CD4-positive, alpha-beta memory T cell (primary cell): ENCODE measurements at regions of chr10 and their contacts with region 1.

Region 1: DNA sequence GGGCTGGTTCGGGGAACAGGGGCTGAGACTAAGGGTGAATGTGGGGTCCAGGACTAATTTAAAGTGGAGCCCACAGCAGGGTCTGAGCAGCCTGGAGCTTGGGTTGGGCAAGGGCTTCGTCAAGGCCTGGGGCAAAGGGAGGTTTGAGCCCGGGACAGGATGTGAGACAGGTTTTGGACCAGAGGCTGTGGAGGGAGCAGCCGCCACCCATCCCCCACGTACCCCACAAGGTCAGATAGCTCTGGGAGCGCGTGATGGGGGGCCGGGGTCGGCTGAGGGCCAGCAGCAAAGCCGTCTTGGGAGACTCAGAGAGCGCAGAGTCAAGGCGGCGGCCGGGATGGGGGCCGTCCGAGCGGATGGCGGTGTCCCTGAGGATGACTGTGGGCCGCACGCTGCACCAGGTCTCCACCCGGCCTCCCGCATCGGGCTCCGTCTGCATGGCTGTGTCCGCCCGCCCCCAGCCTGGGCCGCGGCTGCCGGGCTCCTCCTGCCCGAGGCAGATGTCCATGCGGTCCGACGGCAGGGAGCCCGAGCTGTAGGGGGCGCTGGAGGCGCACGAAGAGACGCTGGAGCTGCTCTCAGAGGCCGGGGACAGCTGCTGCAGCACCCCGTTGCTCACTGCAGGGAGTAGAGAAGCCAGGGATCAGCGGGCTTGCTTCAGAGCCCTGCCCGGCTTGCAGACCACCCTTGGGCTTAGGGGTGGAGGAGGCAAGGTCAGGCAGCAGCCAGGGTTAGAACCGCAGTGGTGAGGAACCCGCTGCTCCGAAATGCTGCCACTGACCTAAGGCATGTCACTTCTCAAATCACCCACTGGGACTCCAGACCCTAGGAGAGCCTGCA is 12.1 kb downstream of the PDZD7 start:
- DNase-seq: peak; percentile 53 to 68 (median 59)
- H3K4me3 ChIP-seq: no peak overlapping the region
- H3K4me3 Mint-ChIP-seq: no peak overlapping the region
- H3K27ac ChIP-seq: no peak overlapping the region
- H3K27ac Mint-ChIP-seq: no peak overlapping the region
- H3K4me1 ChIP-seq: peaks cover 7% of the 10 kb centered on the region
- H3K4me1 Mint-ChIP-seq: peaks cover 5 to 10% (median 6%) of the 10 kb centered on the region in 4 donors
- H3K27me3 ChIP-seq: peaks cover 11% of the 10 kb centered on the region
- H3K27me3 Mint-ChIP-seq: peaks cover 25 to 32% of the 10 kb centered on the region in 2 donors

Region 2: GRCh38 chr10:100969187-100970075 is 49.4 kb before region 1 on chr10 and contains the start of gene SEMA4G:
- CTCF ChIA-PET with region 1: interaction called, 60 read pairs
- POLR2A ChIA-PET with region 1: interaction called, 3 read pairs
- intact Hi-C with region 1: loop called (anchors 2 kb)
- DNase-seq: peak; percentile 24 to 49 (median 32)
- H3K4me3 ChIP-seq: peak within 1 kb of the TSS in 1 of 2 donors; percentile 58
- H3K4me3 Mint-ChIP-seq: peak within 1 kb of the TSS; percentile 66 to 81 (median 76)
- H3K27ac ChIP-seq: no peak within 1 kb of the TSS
- H3K27ac Mint-ChIP-seq: peak within 1 kb of the TSS in 4 of 7 donors; percentile 43 to 70 (median 59)
- H3K4me1 ChIP-seq: peaks cover 18% of the 10 kb centered on the region
- H3K4me1 Mint-ChIP-seq: peaks cover 4 to 23% (median 14%) of the 10 kb centered on the region in 4 donors
- H3K27me3 ChIP-seq: no peaks in the 10 kb centered on the region
- H3K27me3 Mint-ChIP-seq: no peaks in the 10 kb centered on the region
- total RNA-seq, gene SEMA4G: 1.1 to 1.4 TPM

Region 3: GRCh38 chr10:101042667-101043355 is 24.0 kb after region 1 on chr10:
- CTCF ChIA-PET with region 1: interaction called, 53 read pairs
- POLR2A ChIA-PET with region 1: interaction called, 4 read pairs
- intact Hi-C with region 1: no loop called
- DNase-seq: peak; percentile 64 to 84 (median 68)
- H3K4me3 ChIP-seq: peak overlapping the region; percentile 81 to 94
- H3K4me3 Mint-ChIP-seq: peak overlapping the region; percentile 92 to 99 (median 97)
- H3K27ac ChIP-seq: peak overlapping the region; percentile 68
- H3K27ac Mint-ChIP-seq: peak overlapping the region; percentile 87 to 99 (median 97)
- H3K4me1 ChIP-seq: peaks cover 27% of the 10 kb centered on the region
- H3K4me1 Mint-ChIP-seq: peaks cover 16 to 25% (median 19%) of the 10 kb centered on the region in 4 donors
- H3K27me3 ChIP-seq: peaks cover under 1% of the 10 kb centered on the region
- H3K27me3 Mint-ChIP-seq: peaks cover 11 to 12% of the 10 kb centered on the region in 2 donors

Region 4: DNA sequence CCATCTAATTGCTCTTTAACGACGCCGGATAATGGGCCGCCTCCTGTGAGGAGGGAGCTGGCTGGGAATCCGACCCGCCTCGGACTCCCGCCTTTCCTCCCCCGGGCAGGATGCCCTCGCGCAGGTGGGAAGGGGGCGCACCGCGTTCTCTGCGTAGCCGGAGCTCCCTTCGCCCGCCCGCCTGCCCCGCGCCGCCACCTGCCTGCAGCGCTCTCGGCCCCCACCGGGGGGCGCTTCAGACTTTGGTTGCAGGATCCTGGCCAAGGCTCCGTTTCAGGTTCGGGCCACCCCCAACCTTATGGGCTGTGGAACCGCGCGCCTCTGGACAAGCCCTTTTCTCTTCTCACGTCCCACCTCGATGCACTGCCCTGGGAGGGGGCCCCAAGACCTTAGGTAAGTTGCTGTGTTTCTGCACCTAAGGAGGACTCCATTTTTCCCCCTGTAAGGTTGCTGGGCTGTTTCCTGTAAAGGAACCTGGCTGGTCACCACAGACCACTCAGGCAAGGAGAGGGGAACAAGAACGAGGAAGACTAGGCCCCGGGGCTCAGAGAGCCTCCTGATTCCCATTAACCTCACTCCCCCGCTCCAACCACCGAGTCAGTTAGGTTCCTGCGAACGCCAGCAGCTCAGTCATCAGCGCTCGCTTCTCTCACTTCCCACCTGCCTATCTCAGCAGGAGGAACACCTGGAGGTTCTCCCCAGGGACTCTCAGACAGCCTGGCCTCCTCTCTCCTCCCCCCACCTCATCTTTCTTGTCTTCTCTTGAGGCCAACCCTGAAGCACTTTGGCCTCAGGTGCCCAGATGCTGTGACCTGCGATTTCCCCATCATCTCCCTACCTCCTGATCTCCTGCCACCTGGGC is 31.6 kb after region 1 on chr10:
- CTCF ChIA-PET with region 1: interaction called, 31 read pairs
- POLR2A ChIA-PET with region 1: no interaction called
- intact Hi-C with region 1: no loop called
- DNase-seq: peak; percentile 72 to 81 (median 73)
- H3K4me3 ChIP-seq: no peak overlapping the region
- H3K4me3 Mint-ChIP-seq: peak overlapping the region in 6 of 8 donors; percentile 13 to 65 (median 41)
- H3K27ac ChIP-seq: no peak overlapping the region
- H3K27ac Mint-ChIP-seq: peak overlapping the region in 1 of 7 donors; percentile 75
- H3K4me1 ChIP-seq: peaks cover 10% of the 10 kb centered on the region
- H3K4me1 Mint-ChIP-seq: peaks cover 3 to 25% (median 8%) of the 10 kb centered on the region in 4 donors
- H3K27me3 ChIP-seq: peaks cover 33% of the 10 kb centered on the region
- H3K27me3 Mint-ChIP-seq: peaks cover 35 to 38% of the 10 kb centered on the region in 2 donors

Region 5: DNA sequence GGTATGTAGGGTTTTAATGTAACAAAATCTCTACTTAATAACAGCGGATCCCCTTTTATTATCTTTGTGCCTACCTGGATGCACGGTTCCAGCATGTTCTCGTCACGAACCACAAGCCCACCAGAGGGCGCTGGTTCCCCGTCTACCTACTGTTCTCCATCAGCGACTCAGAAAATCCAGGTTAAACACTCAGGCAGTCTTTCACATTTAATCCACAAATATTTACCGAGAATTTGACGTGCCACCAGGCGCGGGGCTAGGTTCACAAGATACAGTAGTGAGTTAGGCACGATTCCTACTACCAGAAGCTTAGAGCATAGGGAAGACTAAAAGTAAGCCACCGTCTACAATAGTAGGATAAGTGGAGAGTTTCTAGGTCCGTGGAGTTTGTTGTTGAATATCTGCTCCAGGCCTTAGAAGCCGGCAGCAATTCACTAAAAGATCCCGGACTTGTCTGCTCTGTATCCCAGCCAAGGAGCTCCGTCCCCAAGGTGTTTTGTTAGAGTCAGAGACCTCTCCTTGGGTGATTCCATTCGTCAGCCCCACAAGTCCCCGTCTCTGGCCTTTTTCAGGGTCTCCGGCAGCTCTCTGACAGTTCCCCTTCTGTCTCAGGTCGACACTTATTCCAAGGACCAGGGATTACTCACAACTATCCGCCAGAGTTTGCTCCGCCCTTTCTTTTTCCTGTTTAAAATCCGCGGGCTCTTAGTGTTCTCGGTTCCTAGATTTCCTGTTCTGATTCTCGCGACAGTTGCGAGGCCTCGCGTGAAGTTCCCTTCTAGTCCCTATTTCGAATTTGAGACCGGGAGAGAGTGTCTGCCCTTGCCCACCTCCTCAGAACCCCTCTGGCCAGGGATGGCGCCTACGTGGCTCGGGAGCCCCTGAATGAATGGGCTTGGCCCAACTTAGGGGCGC is 41.5 kb after region 1 on chr10:
- CTCF ChIA-PET with region 1: interaction called, 13 read pairs
- POLR2A ChIA-PET with region 1: interaction called, 3 read pairs
- intact Hi-C with region 1: loop called (anchors 1 kb)
- DNase-seq: peak; percentile 80 to 98 (median 94)
- H3K4me3 ChIP-seq: peak overlapping the region; percentile 99 to 100
- H3K4me3 Mint-ChIP-seq: peak overlapping the region; percentile 92 to 98 (median 95)
- H3K27ac ChIP-seq: peak overlapping the region; percentile 92
- H3K27ac Mint-ChIP-seq: peak overlapping the region; percentile 88 to 99 (median 98)
- H3K4me1 ChIP-seq: peaks cover 28% of the 10 kb centered on the region
- H3K4me1 Mint-ChIP-seq: peaks cover 14 to 35% (median 22%) of the 10 kb centered on the region in 4 donors
- H3K27me3 ChIP-seq: peaks cover 23% of the 10 kb centered on the region
- H3K27me3 Mint-ChIP-seq: peaks cover 14 to 17% of the 10 kb centered on the region in 2 donors

Region 6: GRCh38 chr10:101067356-101068083 is 48.7 kb after region 1 on chr10:
- CTCF ChIA-PET with region 1: interaction called, 12 read pairs
- POLR2A ChIA-PET with region 1: no interaction called
- intact Hi-C with region 1: loop called (anchors 1 kb)
- DNase-seq: peak; percentile 68 to 78 (median 72)
- H3K4me3 ChIP-seq: peak overlapping the region; percentile 52 to 76
- H3K4me3 Mint-ChIP-seq: peak overlapping the region; percentile 90 to 97 (median 92)
- H3K27ac ChIP-seq: no peak overlapping the region
- H3K27ac Mint-ChIP-seq: peak overlapping the region in 3 of 7 donors; percentile 4 to 75 (median 24)
- H3K4me1 ChIP-seq: peaks cover 28% of the 10 kb centered on the region
- H3K4me1 Mint-ChIP-seq: peaks cover 4 to 32% (median 10%) of the 10 kb centered on the region in 4 donors
- H3K27me3 ChIP-seq: peaks cover 45% of the 10 kb centered on the region
- H3K27me3 Mint-ChIP-seq: peaks cover 23 to 44% of the 10 kb centered on the region in 2 donors

Region 7: GRCh38 chr10:101080933-101081931 is 62.4 kb after region 1 on chr10:
- CTCF ChIA-PET with region 1: no interaction called
- POLR2A ChIA-PET with region 1: no interaction called
- intact Hi-C with region 1: no loop called
- DNase-seq: no peak
- H3K4me3 ChIP-seq: no peak overlapping the region
- H3K4me3 Mint-ChIP-seq: no peak overlapping the region
- H3K27ac ChIP-seq: no peak overlapping the region
- H3K27ac Mint-ChIP-seq: no peak overlapping the region
- H3K4me1 ChIP-seq: no peaks in the 10 kb centered on the region
- H3K4me1 Mint-ChIP-seq: no peaks in the 10 kb centered on the region
- H3K27me3 ChIP-seq: peaks cover 15% of the 10 kb centered on the region
- H3K27me3 Mint-ChIP-seq: peaks cover 34 to 55% of the 10 kb centered on the region in 2 donors